Cardiac septum (tissue), 1 donor: ENCODE measurements at regions of chr6 and their contacts with region 1.

Region 1: GRCh38 chr6:150016324-150017185 is 8.8 kb downstream of the RAET1L start:
- DNase-seq: no peak

Region 2: DNA sequence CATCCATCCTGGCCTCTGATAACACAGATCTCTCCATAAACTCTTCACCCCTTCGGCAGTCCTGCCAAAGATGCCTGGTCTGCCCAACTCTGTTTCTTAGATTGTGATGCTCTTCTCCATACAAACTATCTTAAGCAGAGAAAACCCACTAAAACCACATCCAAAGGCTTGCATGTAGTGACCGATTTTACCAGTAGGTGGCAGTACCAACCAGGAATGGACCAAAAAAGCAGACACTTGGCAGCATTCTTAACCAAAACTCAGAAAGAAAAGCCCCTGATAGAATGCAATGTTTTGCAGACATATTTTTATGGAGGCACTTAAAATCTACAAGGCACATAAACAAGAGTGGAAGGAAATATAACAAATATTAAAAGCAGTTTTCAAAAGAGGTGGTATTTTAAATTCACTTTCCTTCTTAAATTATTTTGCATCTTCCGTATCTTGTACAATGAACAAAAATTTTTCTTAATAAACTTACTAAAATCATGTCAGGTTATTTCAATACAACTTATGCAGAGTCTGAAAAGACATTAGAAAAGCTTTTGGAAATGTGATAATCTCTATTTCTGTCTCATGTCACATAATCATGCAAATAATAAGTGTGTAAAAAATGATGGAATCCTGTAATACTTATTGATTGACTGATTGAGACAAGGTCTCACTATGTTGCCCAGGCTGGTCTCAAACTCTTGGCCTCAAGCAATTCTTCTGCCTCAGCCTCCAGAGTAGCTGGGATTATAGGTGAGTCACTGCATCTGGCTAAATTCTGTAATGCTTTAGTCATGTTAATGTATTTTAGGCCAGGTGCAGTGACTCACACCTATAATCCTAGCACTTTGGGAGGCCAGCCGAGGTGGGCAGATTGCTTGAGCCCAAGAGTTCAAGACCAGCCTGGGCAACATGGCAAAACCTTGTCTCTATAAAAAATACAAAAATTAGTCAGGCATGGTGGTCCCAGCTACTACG is 181.8 kb before region 1 on chr6:
- intact Hi-C with region 1: loop called (anchors 5 kb)
- DNase-seq: no peak

Region 3: GRCh38 chr6:149863697-149864577 is 152.6 kb before region 1 on chr6 and contains the start of gene LRP11:
- intact Hi-C with region 1: no loop called
- DNase-seq: peak; percentile 91
- total RNA-seq, gene LRP11: 11.6 TPM

Region 4: DNA sequence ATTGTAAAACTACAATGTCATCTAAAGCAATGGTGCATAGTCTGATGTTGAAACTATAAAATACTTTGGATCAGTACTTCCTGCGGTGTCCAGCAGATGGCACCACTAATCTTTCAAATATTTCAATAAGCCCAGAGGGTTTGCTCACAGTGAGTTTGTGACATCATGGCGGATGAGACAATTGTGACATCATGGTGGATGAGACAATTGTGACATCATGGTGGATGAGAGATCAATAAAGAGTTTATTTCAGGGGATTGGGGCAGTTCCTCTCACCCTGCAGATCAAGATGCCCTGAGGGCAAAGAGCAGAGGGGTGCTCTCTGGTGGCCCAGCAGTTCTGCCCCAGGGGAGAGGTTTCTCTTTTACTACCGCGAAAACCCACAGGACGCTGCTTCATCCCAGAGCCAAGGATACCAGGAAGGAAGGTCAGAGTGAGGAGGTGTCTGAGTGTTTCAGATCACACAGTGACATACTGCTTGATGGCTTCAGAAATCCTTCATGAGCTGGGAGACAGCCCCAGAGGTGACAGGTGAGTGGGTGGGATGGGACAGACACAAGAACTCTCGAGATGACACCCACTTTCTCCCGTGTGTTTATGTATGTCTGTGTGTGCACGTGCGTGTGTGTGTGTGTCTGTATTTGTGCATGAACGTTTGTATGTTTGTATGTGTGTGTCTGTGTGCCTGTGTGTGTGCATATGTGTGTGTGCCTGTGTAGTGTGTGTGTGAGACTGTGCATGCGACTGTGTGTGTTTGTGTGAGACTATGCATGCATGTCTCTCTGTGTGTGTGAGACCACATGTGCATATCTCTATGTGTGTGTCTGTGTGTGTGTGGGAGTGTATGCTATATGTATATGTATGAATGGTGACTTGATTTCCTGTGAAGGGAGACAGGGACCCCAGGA is 82.1 kb before region 1 on chr6:
- intact Hi-C with region 1: loop called (anchors 2 kb)
- DNase-seq: peak; percentile 67

Region 5: GRCh38 chr6:150072201-150072600 is 55.6 kb after region 1 on chr6:
- intact Hi-C with region 1: no loop called
- DNase-seq: no peak